Psoas muscle (tissue), 8 donors: ENCODE measurements at regions of chr1 and their contacts with region 1.

Region 1: DNA sequence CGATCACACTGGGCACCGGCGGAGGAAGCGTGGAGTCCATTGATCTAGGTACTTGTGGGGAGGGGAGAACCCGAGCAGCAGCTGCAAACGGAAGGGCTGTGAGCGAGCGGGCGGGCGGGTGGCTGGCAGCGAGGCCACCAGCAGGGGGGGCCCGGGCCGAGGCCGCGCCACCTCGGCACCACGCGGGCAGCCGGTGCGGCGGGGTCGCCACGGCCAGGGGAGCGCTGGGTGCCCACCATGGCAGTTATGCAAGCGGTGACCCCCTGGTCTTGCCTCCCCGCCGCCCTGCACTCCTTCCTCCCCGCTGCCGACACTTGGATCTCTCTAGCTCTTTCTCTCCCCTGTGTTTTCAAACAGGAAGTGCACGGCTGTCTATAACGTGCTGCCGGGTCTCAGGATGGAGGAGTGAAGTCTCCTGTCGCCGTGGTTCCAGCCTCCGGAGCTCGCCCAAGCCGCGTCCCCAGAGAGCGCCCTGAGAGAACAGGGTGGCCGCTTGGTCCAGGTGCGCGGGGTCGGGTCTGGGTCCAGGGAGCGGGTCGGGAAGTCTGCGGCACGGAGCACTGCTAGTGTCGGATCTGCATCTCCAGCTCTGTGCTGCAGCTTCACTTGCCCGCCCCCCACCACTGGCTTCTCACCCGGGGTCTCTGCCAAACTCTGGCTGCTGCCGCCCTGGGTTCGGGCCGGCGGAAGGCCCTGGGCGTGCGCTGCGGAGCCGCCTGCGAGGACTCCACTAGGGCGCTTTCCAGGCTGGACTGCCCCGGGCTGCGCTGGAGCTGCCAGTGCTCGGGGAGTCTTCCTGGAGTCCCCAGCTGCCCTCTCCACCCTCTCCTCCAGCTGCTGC is 22.7 kb downstream of the LRRC8D start:
- DNase-seq: peak; percentile 73 to 81
- ATAC-seq: peak; percentile 94 to 96 (median 96)
- H3K4me3 ChIP-seq: peak overlapping the region; percentile 90
- H3K27ac ChIP-seq: peak overlapping the region; percentile 75
- H3K4me1 ChIP-seq: peaks cover 12% of the 10 kb centered on the region
- H3K27me3 ChIP-seq: no peaks in the 10 kb centered on the region
- CTCF ChIP-seq: peak; percentile 75

Region 2: GRCh38 chr1:89910780-89911179 is 67.3 kb after region 1 on chr1:
- intact Hi-C with region 1: loop called in 1 of 2 experiments (anchors 10 kb)
- DNase-seq: no peak
- ATAC-seq: no peak
- H3K4me3 ChIP-seq: no peak overlapping the region
- H3K27ac ChIP-seq: no peak overlapping the region
- H3K4me1 ChIP-seq: peaks cover 54% of the 10 kb centered on the region
- H3K27me3 ChIP-seq: no peaks in the 10 kb centered on the region
- CTCF ChIP-seq: no peak

Region 3: GRCh38 chr1:89987170-89987819 is 143.8 kb after region 1 on chr1:
- intact Hi-C with region 1: loop called (anchors 1 to 10 kb)
- DNase-seq: no peak
- ATAC-seq: peak; percentile 83 to 98 (median 90)
- H3K4me3 ChIP-seq: no peak overlapping the region
- H3K27ac ChIP-seq: no peak overlapping the region
- H3K4me1 ChIP-seq: peaks cover 3% of the 10 kb centered on the region
- H3K27me3 ChIP-seq: no peaks in the 10 kb centered on the region
- CTCF ChIP-seq: peak; percentile 83